HCT116 (cell line): ENCODE measurements at regions of chr14 and their contacts with region 1.

Region 1: DNA sequence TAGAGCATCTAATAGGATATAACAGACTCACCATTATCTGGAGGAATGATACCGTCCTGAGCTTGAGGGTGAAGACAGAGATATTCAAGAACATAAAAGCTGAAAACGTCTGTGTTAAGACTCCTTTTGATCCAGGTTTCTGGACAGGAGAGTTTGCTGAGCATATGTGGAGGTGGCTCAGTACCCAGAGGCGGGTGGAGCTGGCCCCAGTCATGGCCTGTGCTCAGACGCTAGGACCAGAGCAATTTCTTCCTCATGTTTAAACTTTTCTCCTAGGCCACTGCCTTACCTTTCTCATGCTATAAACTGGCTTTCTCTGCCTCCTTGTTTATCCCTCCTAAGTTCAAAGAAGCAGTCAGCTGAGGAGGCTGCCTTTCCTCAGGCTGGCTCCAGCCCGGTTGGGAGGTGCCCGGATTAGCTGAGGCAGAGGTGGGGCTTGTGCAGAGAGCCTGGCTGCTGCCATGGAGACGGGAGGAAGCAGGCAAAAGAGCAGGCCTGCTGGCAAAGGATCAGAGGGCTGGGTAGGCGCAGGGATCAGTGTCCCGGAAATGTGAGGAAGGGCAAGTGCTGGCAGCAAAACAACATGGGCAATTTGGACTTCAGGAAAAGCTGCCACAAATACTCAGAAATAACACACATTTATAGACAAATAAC is 13.7 kb downstream of the COA8 start:
- DNase-seq: peak; percentile 53
- ATAC-seq: peak; percentile 96
- H3K4me3 ChIP-seq: peak overlapping the region in 1 of 2 experiments; percentile 4; a peak in 1 of 4 replicates
- H3K27ac ChIP-seq: peak overlapping the region; percentile 40
- H3K4me1 ChIP-seq: peaks cover 23 to 29% of the 10 kb centered on the region in 2 experiments
- H3K27me3 ChIP-seq: no peaks in the 10 kb centered on the region
- CTCF ChIP-seq: no peak
- POLR2A ChIP-seq: no peak
- RAD21 ChIP-seq: no peak; the same call in none of the 2 replicates

Region 2: DNA sequence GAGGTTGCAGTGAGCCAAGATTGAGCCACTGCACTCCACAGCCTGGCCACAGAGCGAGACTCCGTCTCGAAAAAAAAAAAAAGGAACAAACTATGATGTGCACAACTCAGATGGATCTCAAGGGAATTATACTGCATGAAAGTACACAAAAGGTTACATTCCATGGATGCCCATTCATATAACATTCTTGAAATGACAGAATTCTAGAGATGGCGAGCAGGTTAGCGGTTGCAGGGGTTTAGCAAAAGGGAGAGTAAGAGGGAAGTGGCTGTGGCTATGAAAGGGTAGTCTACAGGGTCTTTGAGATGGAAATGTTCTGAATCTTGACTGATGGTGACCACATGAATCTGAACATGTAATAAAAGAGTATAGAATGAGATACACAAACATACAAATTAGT is 103.6 kb before region 1 on chr14:
- CTCF ChIA-PET with region 1: no interaction called
- POLR2A ChIA-PET with region 1: no interaction called
- RAD21 ChIA-PET with region 1: no interaction called
- intact Hi-C with region 1: no loop called
- DNase-seq: no peak
- ATAC-seq: no peak
- H3K4me3 ChIP-seq: no peak overlapping the region
- H3K27ac ChIP-seq: no peak overlapping the region
- H3K4me1 ChIP-seq: peaks cover 7 to 23% of the 10 kb centered on the region in 2 experiments; a peak in 3 of 4 replicates
- H3K27me3 ChIP-seq: no peaks in the 10 kb centered on the region
- CTCF ChIP-seq: no peak
- POLR2A ChIP-seq: no peak
- RAD21 ChIP-seq: no peak

Region 3: DNA sequence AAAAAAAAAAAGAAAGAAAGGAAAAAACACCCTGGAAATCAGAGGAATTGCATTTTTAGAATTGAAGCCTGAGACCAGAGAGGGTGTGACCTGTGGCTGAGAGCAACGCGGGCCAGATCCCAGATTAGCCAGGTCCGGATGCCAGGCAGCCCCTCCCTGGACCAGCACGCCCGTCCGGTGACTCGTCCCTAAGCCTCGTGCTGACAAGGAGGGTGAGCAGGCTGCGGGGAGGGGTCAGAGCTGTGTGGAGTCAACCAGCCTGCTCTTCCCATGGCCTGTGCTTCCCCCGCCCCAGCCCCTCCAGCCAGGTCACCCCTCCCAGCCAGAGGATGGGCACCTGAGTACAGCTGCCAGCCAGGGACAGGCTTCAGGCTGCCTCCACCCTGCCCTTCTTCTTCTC is 48.4 kb after region 1 on chr14:
- CTCF ChIA-PET with region 1: no interaction called
- POLR2A ChIA-PET with region 1: no interaction called
- RAD21 ChIA-PET with region 1: no interaction called
- intact Hi-C with region 1: loop called (anchors 2 kb)
- DNase-seq: peak; percentile 56
- ATAC-seq: peak; percentile 63
- H3K4me3 ChIP-seq: peak overlapping the region in 1 of 2 experiments; percentile 17; a peak in 1 of 4 replicates
- H3K27ac ChIP-seq: no peak overlapping the region
- H3K4me1 ChIP-seq: peaks cover 28 to 60% of the 10 kb centered on the region in 2 experiments
- H3K27me3 ChIP-seq: no peaks in the 10 kb centered on the region
- CTCF ChIP-seq: no peak
- POLR2A ChIP-seq: no peak
- RAD21 ChIP-seq: no peak

Region 4: DNA sequence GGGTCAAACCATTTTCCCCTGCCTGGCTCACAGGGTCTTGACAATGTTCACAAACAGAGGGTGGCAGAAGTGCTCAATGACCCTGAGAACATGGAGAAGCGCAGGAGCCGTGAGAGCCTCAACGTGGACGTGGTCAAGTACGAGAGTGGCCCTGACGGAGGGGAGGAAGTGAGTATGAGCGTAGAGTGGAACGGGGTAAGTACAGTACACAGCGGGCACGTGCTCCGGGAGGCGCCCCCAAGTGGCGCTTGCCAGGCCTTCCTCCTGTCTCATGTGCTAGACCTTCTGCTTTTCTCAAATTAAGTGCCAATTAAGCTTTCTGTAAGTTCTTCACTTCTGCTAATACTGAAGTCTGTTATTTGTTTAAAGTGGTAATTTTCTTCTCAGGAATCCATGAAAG is 102.9 kb after region 1 on chr14:
- CTCF ChIA-PET with region 1: no interaction called
- POLR2A ChIA-PET with region 1: no interaction called
- RAD21 ChIA-PET with region 1: no interaction called
- intact Hi-C with region 1: loop called (anchors 2 kb)
- DNase-seq: peak; percentile 3
- ATAC-seq: peak; percentile 95
- H3K4me3 ChIP-seq: no peak overlapping the region
- H3K27ac ChIP-seq: no peak overlapping the region
- H3K4me1 ChIP-seq: no peaks in the 10 kb centered on the region
- H3K27me3 ChIP-seq: no peaks in the 10 kb centered on the region
- CTCF ChIP-seq: peak; percentile 31 to 64 (median 54); a peak in 5 of 6 replicates
- POLR2A ChIP-seq: no peak
- RAD21 ChIP-seq: peak; percentile 47

Region 5: GRCh38 chr14:103910262-103910935 is 333.9 kb after region 1 on chr14:
- CTCF ChIA-PET with region 1: no interaction called
- POLR2A ChIA-PET with region 1: no interaction called
- RAD21 ChIA-PET with region 1: no interaction called
- intact Hi-C with region 1: loop called (anchors 10 kb)
- DNase-seq: peak; percentile 86
- ATAC-seq: peak; percentile 100
- H3K4me3 ChIP-seq: 0 out of 4 replicates have a peak overlapping the region, but pooled peaks of 1 of the 2 experiments have one; percentile 4
- H3K27ac ChIP-seq: peak overlapping the region; percentile 49
- H3K4me1 ChIP-seq: peaks cover 5 to 11% of the 10 kb centered on the region in 2 experiments; a peak in 3 of 4 replicates
- H3K27me3 ChIP-seq: no peaks in the 10 kb centered on the region
- CTCF ChIP-seq: peak; percentile 87 to 94 (median 87)
- POLR2A ChIP-seq: no peak
- RAD21 ChIP-seq: peak; percentile 97

Region 6: DNA sequence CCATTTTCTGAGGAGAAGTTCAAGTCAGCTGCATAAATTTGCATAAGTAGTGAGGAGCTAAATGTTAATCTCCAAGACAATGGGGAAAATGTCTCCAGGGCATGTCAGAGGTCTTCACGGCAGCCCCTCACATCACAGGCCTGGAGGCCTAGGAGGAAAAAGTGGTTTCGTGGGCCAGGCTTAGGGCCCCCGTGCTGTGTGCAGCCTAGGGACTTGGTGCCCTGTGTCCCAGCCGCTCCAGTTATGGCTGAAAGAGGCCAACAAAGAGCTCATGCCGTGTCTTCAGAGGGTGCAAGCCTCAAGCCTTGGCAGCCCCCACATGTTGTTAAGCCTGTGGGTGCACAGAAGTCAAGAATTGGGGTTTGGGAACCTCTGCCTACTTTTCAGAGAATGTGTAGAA is 407.7 kb after region 1 on chr14:
- CTCF ChIA-PET with region 1: no interaction called
- POLR2A ChIA-PET with region 1: no interaction called
- RAD21 ChIA-PET with region 1: no interaction called
- intact Hi-C with region 1: loop called (anchors 2 kb)
- DNase-seq: no peak
- ATAC-seq: no peak
- H3K4me3 ChIP-seq: no peak overlapping the region
- H3K27ac ChIP-seq: no peak overlapping the region
- H3K4me1 ChIP-seq: no peaks in the 10 kb centered on the region
- H3K27me3 ChIP-seq: no peaks in the 10 kb centered on the region
- CTCF ChIP-seq: no peak
- POLR2A ChIP-seq: no peak
- RAD21 ChIP-seq: no peak